ENCODE measurements at regions of chr14 and their contacts with region 1.

Region 1: GRCh38 chr14:73633116-73634010 is 11.4 kb upstream of the DNAL1 start:
- DNase-seq: peak; percentile 69 to 85 (median 72)
- H3K4me3 ChIP-seq: peak overlapping the region in 3 of 4 donors; percentile 28 to 56 (median 36)
- H3K27ac ChIP-seq: peak overlapping the region in 4 of 5 donors; percentile 17 to 75 (median 60)
- H3K4me1 ChIP-seq: peaks cover 0 to 6% of the 10 kb centered on the region in 2 donors
- H3K27me3 ChIP-seq: no peaks in the 10 kb centered on the region
- CTCF ChIP-seq: peak; percentile 84 to 96 (median 90)
- POLR2A ChIP-seq: no peak

Region 2: DNA sequence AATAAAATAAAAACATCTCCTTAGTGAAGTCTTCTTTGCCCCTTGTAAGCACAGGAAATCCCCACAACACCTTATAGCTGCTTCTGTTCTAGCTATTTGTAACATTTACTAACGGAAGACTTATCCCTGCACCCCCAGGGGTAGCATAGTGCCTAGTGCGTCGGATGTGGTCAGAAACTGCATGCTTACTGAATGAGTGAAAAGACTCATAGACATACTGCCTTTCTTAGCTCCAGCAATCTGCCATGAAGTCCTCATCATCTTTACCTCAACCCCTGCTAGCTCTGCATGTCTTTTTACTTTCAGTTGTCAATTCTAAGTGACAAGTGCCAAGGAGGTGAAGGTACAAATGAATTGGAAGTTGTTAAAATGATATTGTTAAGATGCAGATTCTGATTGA is 129.7 kb before region 1 on chr14:
- intact Hi-C with region 1: loop called (anchors 2 to 5 kb)
- DNase-seq: no peak
- H3K4me3 ChIP-seq: no peak overlapping the region
- H3K27ac ChIP-seq: no peak overlapping the region
- H3K4me1 ChIP-seq: no peaks in the 10 kb centered on the region
- H3K27me3 ChIP-seq: no peaks in the 10 kb centered on the region
- CTCF ChIP-seq: no peak
- POLR2A ChIP-seq: no peak

Region 3: DNA sequence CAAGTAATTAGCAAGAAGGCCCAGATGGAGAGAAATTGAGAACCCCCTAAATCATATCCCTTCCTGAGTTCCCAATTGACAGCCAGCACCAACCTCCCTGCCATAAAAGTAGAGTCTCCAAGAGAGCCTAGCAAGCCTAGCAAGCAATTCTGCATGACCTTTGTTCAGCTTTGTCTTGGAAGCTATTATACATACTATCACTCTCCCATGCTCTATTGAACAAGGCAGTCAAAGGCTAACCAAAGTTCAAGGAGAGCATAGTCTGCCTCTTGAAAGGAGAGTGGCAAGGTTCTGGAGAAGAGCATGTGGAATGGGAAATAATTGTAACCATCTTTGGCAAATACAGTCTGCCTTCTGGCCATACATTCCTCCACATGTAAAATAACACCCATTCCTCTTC is 33.9 kb before region 1 on chr14:
- intact Hi-C with region 1: no loop called
- DNase-seq: no peak
- H3K4me3 ChIP-seq: no peak overlapping the region
- H3K27ac ChIP-seq: no peak overlapping the region
- H3K4me1 ChIP-seq: no peaks in the 10 kb centered on the region
- H3K27me3 ChIP-seq: no peaks in the 10 kb centered on the region
- CTCF ChIP-seq: no peak
- POLR2A ChIP-seq: no peak